ENCODE measurements at regions of chr11 and their contacts with region 1.

Region 1: GRCh38 chr11:6298605-6299004 is 21.7 kb downstream of the CAVIN3 start:
- DNase-seq: peak; percentile 72 to 76
- H3K4me3 ChIP-seq: no peak overlapping the region
- H3K4me3 Mint-ChIP-seq: no peak overlapping the region
- H3K27ac Mint-ChIP-seq: no peak overlapping the region
- H3K4me1 ChIP-seq: no peaks in the 10 kb centered on the region
- H3K4me1 Mint-ChIP-seq: no peaks in the 10 kb centered on the region
- H3K27me3 ChIP-seq: no peaks in the 10 kb centered on the region
- H3K27me3 Mint-ChIP-seq: no peaks in the 10 kb centered on the region
- CTCF ChIP-seq: peak; percentile 75 to 96

Region 2: DNA sequence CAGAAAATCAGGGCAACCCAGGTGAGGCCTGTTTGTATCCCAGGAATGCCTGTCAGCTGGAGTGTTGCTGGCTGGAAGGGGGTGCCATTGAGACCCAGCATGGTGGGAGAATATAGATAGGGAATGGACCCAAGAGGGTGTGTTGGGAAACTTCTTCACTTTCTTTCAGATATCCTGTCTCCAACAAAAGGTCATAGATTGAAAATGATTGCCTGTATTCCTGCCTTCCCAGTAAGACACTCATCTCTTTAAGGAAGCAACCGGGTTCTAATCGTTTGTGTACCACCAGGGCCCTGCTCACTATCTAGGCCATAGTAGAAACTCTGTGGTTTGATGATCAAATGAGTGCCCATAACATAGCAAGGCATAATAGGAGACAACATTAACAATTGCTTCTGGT is 857.2 kb before region 1 on chr11 and contains the start of gene OR51I1:
- CTCF ChIA-PET with region 1: no interaction called
- POLR2A ChIA-PET with region 1: no interaction called
- intact Hi-C with region 1: no loop called
- DNase-seq: no peak
- H3K4me3 ChIP-seq: no peak within 1 kb of the TSS
- H3K4me3 Mint-ChIP-seq: no peak within 1 kb of the TSS
- H3K27ac Mint-ChIP-seq: no peak within 1 kb of the TSS
- H3K4me1 ChIP-seq: no peaks in the 10 kb centered on the region
- H3K4me1 Mint-ChIP-seq: no peaks in the 10 kb centered on the region
- H3K27me3 ChIP-seq: no peaks in the 10 kb centered on the region
- H3K27me3 Mint-ChIP-seq: peaks cover 20% of the 10 kb centered on the region
- CTCF ChIP-seq: no peak
- total RNA-seq, gene OR51I1: not detected in 2 replicates

Region 3: GRCh38 chr11:6022956-6023355 is 275.6 kb before region 1 on chr11:
- CTCF ChIA-PET with region 1: interaction called, 4 read pairs
- POLR2A ChIA-PET with region 1: no interaction called
- intact Hi-C with region 1: loop called (anchors 2 kb)
- DNase-seq: peak in 1 of 2 experiments; percentile 34
- H3K4me3 ChIP-seq: no peak overlapping the region
- H3K4me3 Mint-ChIP-seq: no peak overlapping the region
- H3K27ac Mint-ChIP-seq: no peak overlapping the region
- H3K4me1 ChIP-seq: no peaks in the 10 kb centered on the region
- H3K4me1 Mint-ChIP-seq: no peaks in the 10 kb centered on the region
- H3K27me3 ChIP-seq: no peaks in the 10 kb centered on the region
- H3K27me3 Mint-ChIP-seq: peaks cover 14% of the 10 kb centered on the region
- CTCF ChIP-seq: peak; percentile 51 to 52

Region 4: GRCh38 chr11:6077723-6078122 is 220.9 kb before region 1 on chr11:
- CTCF ChIA-PET with region 1: no interaction called
- POLR2A ChIA-PET with region 1: no interaction called
- intact Hi-C with region 1: no loop called
- DNase-seq: no peak
- H3K4me3 ChIP-seq: no peak overlapping the region
- H3K4me3 Mint-ChIP-seq: no peak overlapping the region
- H3K27ac Mint-ChIP-seq: no peak overlapping the region
- H3K4me1 ChIP-seq: no peaks in the 10 kb centered on the region
- H3K4me1 Mint-ChIP-seq: no peaks in the 10 kb centered on the region
- H3K27me3 ChIP-seq: no peaks in the 10 kb centered on the region
- H3K27me3 Mint-ChIP-seq: peaks cover 13% of the 10 kb centered on the region
- CTCF ChIP-seq: no peak

Region 5: GRCh38 chr11:6251120-6251733 is 47.4 kb before region 1 on chr11:
- CTCF ChIA-PET with region 1: interaction called, 19 read pairs
- POLR2A ChIA-PET with region 1: no interaction called
- intact Hi-C with region 1: loop called (anchors 1 kb)
- DNase-seq: peak; percentile 81 to 83
- H3K4me3 ChIP-seq: no peak overlapping the region
- H3K4me3 Mint-ChIP-seq: no peak overlapping the region
- H3K27ac Mint-ChIP-seq: no peak overlapping the region
- H3K4me1 ChIP-seq: peaks cover 15% of the 10 kb centered on the region
- H3K4me1 Mint-ChIP-seq: peaks cover 17% of the 10 kb centered on the region
- H3K27me3 ChIP-seq: no peaks in the 10 kb centered on the region
- H3K27me3 Mint-ChIP-seq: no peaks in the 10 kb centered on the region
- CTCF ChIP-seq: peak; percentile 69 to 91